CD4-positive, alpha-beta T cell (primary cell): ENCODE measurements at regions of chr17 and their contacts with region 1.

Region 1: GRCh38 chr17:41308251-41308917 is 725 bp downstream of the KRTAP16-1 start:
- DNase-seq: peak; percentile 71 to 96 (median 84)
- ATAC-seq: peak; percentile 82
- H3K4me3 ChIP-seq: peak overlapping the region; percentile 36
- H3K4me3 Mint-ChIP-seq: peak overlapping the region; percentile 81
- H3K27ac ChIP-seq: peak overlapping the region; percentile 69 to 83
- H3K27ac Mint-ChIP-seq: peak overlapping the region; percentile 98
- H3K4me1 ChIP-seq: peaks cover 55% of the 10 kb centered on the region
- H3K4me1 Mint-ChIP-seq: peaks cover 69% of the 10 kb centered on the region
- H3K27me3 ChIP-seq: no peaks in the 10 kb centered on the region
- H3K27me3 Mint-ChIP-seq: no peaks in the 10 kb centered on the region
- CTCF ChIP-seq: no peak

Region 2: GRCh38 chr17:41116297-41116696 is 192.1 kb before region 1 on chr17:
- CTCF ChIA-PET with region 1: no interaction called
- POLR2A ChIA-PET with region 1: interaction called, 13 read pairs
- intact Hi-C with region 1: loop called in 1 of 2 experiments (anchors 5 kb)
- DNase-seq: peak in 1 of 14 experiments; percentile 14
- ATAC-seq: no peak
- H3K4me3 ChIP-seq: no peak overlapping the region
- H3K4me3 Mint-ChIP-seq: no peak overlapping the region
- H3K27ac ChIP-seq: no peak overlapping the region
- H3K27ac Mint-ChIP-seq: no peak overlapping the region
- H3K4me1 ChIP-seq: peaks cover 6% of the 10 kb centered on the region
- H3K4me1 Mint-ChIP-seq: peaks cover 31% of the 10 kb centered on the region
- H3K27me3 ChIP-seq: no peaks in the 10 kb centered on the region
- H3K27me3 Mint-ChIP-seq: no peaks in the 10 kb centered on the region
- CTCF ChIP-seq: no peak

Region 3: DNA sequence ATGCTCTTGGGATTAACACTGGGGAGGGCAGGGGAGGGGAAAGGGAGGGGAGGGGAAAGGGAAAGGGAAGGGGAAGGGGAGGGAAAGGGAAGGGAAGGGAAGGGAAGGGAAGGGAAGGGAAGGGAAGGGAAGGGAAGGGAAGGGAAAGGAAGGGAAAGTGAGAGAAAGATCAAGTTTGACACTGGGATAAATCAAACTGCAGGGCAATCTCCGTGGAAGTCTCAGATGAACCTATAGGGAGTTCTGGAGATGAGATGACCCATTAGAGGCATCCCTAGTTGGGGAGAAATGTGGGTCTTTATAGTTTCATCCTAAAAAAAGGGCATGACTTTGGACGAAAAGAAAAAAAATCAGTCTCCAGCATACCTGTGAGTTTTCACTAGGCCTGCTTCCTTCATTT is 186.6 kb before region 1 on chr17:
- CTCF ChIA-PET with region 1: no interaction called
- POLR2A ChIA-PET with region 1: interaction called, 13 read pairs
- intact Hi-C with region 1: loop called in 1 of 2 experiments (anchors 5 kb)
- DNase-seq: no peak
- ATAC-seq: no peak
- H3K4me3 ChIP-seq: no peak overlapping the region
- H3K4me3 Mint-ChIP-seq: no peak overlapping the region
- H3K27ac ChIP-seq: no peak overlapping the region
- H3K27ac Mint-ChIP-seq: no peak overlapping the region
- H3K4me1 ChIP-seq: peaks cover 25% of the 10 kb centered on the region
- H3K4me1 Mint-ChIP-seq: peaks cover 71% of the 10 kb centered on the region
- H3K27me3 ChIP-seq: no peaks in the 10 kb centered on the region
- H3K27me3 Mint-ChIP-seq: no peaks in the 10 kb centered on the region
- CTCF ChIP-seq: no peak

Region 4: DNA sequence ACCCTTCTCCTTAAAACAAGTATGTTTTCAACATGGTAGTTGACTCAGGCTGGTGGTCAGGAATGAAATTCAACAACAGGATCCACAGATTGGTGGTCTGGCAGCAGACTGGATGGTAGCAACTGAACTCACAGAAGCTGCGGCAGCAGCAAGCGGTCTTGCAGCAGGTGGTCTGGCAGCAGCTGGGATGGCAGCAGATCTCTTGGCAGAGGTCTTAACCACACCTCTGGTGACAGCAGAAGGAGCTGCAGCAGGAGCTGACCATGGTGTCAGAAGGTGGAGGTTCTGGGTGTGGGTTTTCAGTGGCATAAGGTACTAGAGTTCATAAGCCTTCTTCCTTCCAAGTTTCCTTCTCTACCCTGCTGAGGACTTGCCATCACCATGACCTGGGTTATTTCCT is 121.5 kb before region 1 on chr17:
- CTCF ChIA-PET with region 1: no interaction called
- POLR2A ChIA-PET with region 1: no interaction called
- intact Hi-C with region 1: no loop called
- DNase-seq: no peak
- ATAC-seq: no peak
- H3K4me3 ChIP-seq: no peak overlapping the region
- H3K4me3 Mint-ChIP-seq: no peak overlapping the region
- H3K27ac ChIP-seq: no peak overlapping the region
- H3K27ac Mint-ChIP-seq: no peak overlapping the region
- H3K4me1 ChIP-seq: no peaks in the 10 kb centered on the region
- H3K4me1 Mint-ChIP-seq: no peaks in the 10 kb centered on the region
- H3K27me3 ChIP-seq: no peaks in the 10 kb centered on the region
- H3K27me3 Mint-ChIP-seq: peaks cover 26% of the 10 kb centered on the region
- CTCF ChIP-seq: no peak

Region 5: GRCh38 chr17:41226051-41226450 is 82.3 kb before region 1 on chr17:
- CTCF ChIA-PET with region 1: no interaction called
- POLR2A ChIA-PET with region 1: no interaction called
- intact Hi-C with region 1: no loop called
- DNase-seq: no peak
- ATAC-seq: no peak
- H3K4me3 ChIP-seq: no peak overlapping the region
- H3K4me3 Mint-ChIP-seq: no peak overlapping the region
- H3K27ac ChIP-seq: no peak overlapping the region
- H3K27ac Mint-ChIP-seq: no peak overlapping the region
- H3K4me1 ChIP-seq: no peaks in the 10 kb centered on the region
- H3K4me1 Mint-ChIP-seq: no peaks in the 10 kb centered on the region
- H3K27me3 ChIP-seq: no peaks in the 10 kb centered on the region
- H3K27me3 Mint-ChIP-seq: peaks cover 13% of the 10 kb centered on the region
- CTCF ChIP-seq: no peak

Region 6: GRCh38 chr17:41338961-41339485 is 30.6 kb after region 1 on chr17:
- CTCF ChIA-PET with region 1: no interaction called
- POLR2A ChIA-PET with region 1: interaction called, 61 read pairs
- intact Hi-C with region 1: loop called in 1 of 2 experiments (anchors 1 kb)
- DNase-seq: peak in 8 of 14 experiments; percentile 25 to 93 (median 52)
- ATAC-seq: peak; percentile 83
- H3K4me3 ChIP-seq: no peak overlapping the region
- H3K4me3 Mint-ChIP-seq: peak overlapping the region; percentile 23
- H3K27ac ChIP-seq: peak overlapping the region; percentile 87 to 88
- H3K27ac Mint-ChIP-seq: peak overlapping the region; percentile 94
- H3K4me1 ChIP-seq: peaks cover 88% of the 10 kb centered on the region
- H3K4me1 Mint-ChIP-seq: peaks cover 88% of the 10 kb centered on the region
- H3K27me3 ChIP-seq: no peaks in the 10 kb centered on the region
- H3K27me3 Mint-ChIP-seq: no peaks in the 10 kb centered on the region
- CTCF ChIP-seq: no peak